ENCODE measurements at regions of chr11 and their contacts with region 1.

Region 1: GRCh38 chr11:128831174-128832120 is 35.6 kb downstream of the KCNJ1 start:
- DNase-seq: peak; percentile 89
- H3K4me3 Mint-ChIP-seq: no peak overlapping the region
- H3K27ac Mint-ChIP-seq: peak overlapping the region; percentile 29
- H3K4me1 Mint-ChIP-seq: peaks cover 28% of the 10 kb centered on the region
- H3K27me3 Mint-ChIP-seq: no peaks in the 10 kb centered on the region

Region 2: DNA sequence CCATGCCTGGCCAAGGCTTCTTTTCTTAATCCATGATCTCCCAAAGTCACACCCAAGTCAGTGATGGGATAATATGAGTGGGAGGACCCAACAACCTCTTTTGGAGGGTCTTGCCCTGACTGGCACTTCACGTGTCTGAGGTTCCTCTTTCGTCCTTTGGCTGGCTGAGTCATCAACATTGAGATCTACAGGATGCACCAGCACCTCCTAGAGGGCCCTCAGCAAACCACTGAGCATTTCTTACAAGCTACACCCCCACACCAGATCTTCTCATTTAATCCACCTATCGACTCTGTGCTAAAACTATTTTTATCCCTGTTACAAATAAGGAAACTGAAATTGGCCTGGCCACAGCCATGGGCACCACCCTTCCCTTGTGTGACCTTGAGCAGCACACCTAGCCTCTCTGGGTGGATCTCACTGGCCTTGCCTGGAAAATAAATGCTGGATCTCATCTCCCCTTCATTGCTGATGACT is 74.2 kb before region 1 on chr11:
- CTCF ChIA-PET with region 1: interaction called, 13 read pairs
- POLR2A ChIA-PET with region 1: no interaction called
- DNase-seq: peak; percentile 77
- H3K4me3 Mint-ChIP-seq: peak overlapping the region; percentile 24
- H3K27ac Mint-ChIP-seq: peak overlapping the region; percentile 87
- H3K4me1 Mint-ChIP-seq: peaks cover 75% of the 10 kb centered on the region
- H3K27me3 Mint-ChIP-seq: no peaks in the 10 kb centered on the region

Region 3: GRCh38 chr11:128809128-128809527 is 22.3 kb before region 1 on chr11:
- CTCF ChIA-PET with region 1: interaction called, 20 read pairs
- POLR2A ChIA-PET with region 1: no interaction called
- DNase-seq: no peak
- H3K4me3 Mint-ChIP-seq: no peak overlapping the region
- H3K27ac Mint-ChIP-seq: no peak overlapping the region
- H3K4me1 Mint-ChIP-seq: peaks cover 12% of the 10 kb centered on the region
- H3K27me3 Mint-ChIP-seq: no peaks in the 10 kb centered on the region

Region 4: GRCh38 chr11:128859563-128860441 is 28.4 kb after region 1 on chr11:
- CTCF ChIA-PET with region 1: interaction called, 12 read pairs
- POLR2A ChIA-PET with region 1: no interaction called
- DNase-seq: peak; percentile 82
- H3K4me3 Mint-ChIP-seq: no peak overlapping the region
- H3K27ac Mint-ChIP-seq: no peak overlapping the region
- H3K4me1 Mint-ChIP-seq: peaks cover 8% of the 10 kb centered on the region
- H3K27me3 Mint-ChIP-seq: peaks cover 7% of the 10 kb centered on the region

Region 5: DNA sequence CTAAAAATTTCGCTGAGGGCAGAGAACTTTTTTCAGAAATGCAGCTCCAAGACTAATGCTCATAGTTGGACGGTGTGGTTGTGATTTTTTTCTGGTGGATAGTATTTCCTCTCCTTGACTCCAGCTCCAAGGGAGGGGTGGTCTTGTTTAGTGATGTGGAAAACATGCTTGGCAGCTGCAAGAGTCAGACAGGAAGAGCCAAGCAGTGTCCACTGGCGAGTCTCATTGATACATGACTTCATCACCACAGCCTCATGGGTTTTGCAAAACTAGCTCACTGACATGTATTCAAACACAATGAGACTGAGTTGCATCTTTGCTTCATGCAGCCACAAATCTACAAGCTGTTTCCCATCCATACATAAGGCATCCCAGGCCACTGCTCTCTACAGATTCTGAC is 43.0 kb after region 1 on chr11:
- CTCF ChIA-PET with region 1: no interaction called
- POLR2A ChIA-PET with region 1: no interaction called
- DNase-seq: no peak
- H3K4me3 Mint-ChIP-seq: no peak overlapping the region
- H3K27ac Mint-ChIP-seq: no peak overlapping the region
- H3K4me1 Mint-ChIP-seq: no peaks in the 10 kb centered on the region
- H3K27me3 Mint-ChIP-seq: peaks cover 14% of the 10 kb centered on the region

Region 6: DNA sequence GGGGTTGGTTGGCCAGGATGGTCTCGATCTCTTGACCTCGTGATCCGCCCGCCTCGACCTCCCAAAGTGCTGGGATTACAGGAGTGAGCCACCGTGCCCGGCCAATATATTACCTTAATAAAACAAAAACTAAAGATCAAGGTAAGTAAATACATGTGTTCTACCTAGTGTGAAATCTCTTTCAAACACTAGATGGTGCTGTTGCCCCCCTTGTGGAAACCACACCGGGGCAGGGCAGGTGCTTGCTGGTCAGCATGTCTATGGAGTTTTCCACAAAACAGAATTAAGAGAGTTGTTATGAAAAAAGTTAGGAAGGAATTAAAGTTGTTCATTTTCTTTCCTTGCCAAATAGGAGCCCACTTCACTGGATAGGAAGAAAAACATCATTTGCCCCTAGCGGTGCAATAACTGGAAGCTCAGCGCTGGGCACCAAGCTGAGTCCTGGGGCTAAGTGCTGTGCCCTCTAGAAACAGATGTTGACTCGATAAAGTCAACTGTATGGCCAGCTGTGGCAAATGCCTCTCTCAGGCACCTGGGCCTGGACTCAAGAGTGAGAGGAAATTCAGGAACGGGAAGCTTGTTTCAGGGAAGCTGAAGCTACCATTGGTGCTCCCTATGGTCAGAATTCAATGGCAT is 53.4 kb after region 1 on chr11:
- CTCF ChIA-PET with region 1: no interaction called
- POLR2A ChIA-PET with region 1: no interaction called
- DNase-seq: peak; percentile 63
- H3K4me3 Mint-ChIP-seq: no peak overlapping the region
- H3K27ac Mint-ChIP-seq: no peak overlapping the region
- H3K4me1 Mint-ChIP-seq: peaks cover 9% of the 10 kb centered on the region
- H3K27me3 Mint-ChIP-seq: peaks cover 58% of the 10 kb centered on the region

Measured in activated CD4-positive, alpha-beta memory T cell treated with anti-CD3 and anti-CD28 coated beads, Interleukin-2, amount 10 ng/mL, durations not matched to agents 7 days and 5 days (primary cell).